Lower leg skin (tissue), 4 donors: ENCODE measurements at regions of chr13 and their contacts with region 1.

Region 1: DNA sequence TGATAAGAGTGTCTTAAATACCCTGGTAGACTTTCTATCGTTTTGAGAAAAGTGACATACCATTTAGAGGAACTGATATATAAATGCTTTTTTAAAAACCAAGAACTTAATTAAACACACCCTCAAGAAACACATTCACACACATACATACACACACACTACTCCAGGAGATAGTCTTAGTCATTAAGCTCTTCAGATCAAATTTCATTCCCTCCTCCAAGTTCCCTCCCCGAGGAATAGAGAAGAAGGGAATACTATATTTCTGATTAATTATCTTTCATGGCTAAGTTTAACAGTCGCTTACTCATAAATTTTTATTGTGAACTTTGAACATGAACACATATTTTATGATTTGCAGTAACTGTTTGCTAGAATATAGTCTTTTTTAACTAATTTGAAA is 1109.5 kb downstream of the SLITRK1 start:
- DNase-seq: no peak
- H3K4me3 ChIP-seq: no peak overlapping the region
- CTCF ChIP-seq: no peak
- POLR2A ChIP-seq: no peak

Region 2: DNA sequence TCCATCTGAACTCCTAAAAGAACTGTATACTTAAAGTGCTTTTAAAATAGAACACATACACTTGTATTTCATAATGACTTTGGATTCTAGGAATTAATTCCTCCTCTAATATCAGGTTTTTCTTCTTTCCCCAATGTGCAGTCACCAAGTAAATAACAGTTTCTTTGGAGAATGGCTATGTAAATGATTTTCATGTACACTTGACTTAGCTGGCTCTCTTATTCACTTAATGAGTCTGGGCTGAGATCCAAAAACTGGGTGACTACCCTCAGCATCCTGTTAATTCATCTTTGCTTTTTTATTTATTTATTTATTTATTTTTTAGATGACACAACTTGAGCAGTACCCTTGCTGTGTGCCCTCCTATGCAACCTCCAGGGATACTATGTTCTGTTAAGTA is 105.7 kb after region 1 on chr13:
- intact Hi-C with region 1: no loop called
- DNase-seq: no peak
- H3K4me3 ChIP-seq: no peak overlapping the region
- CTCF ChIP-seq: no peak
- POLR2A ChIP-seq: no peak

Region 3: GRCh38 chr13:83077499-83077898 is 304.7 kb after region 1 on chr13:
- intact Hi-C with region 1: no loop called
- DNase-seq: no peak
- H3K4me3 ChIP-seq: no peak overlapping the region
- CTCF ChIP-seq: no peak
- POLR2A ChIP-seq: no peak

Region 4: DNA sequence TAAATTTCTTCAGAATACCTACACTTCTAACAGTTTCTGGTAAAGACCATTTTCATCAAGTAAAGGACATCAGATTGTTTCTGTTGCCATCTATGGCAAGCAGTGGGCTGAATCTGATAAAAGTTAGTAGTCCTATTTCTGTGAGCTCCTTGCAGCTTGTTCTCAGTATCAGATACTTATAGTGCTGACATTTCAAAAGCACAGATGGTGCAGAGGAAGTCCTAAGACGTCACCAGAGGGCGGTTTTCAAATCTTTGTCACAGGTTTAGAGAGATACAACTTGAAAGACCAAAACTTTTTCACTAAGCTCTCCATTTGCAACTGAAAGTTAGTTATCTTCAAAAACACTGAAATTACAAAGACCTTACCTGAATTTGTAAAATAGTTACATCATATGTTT is 389.7 kb after region 1 on chr13:
- intact Hi-C with region 1: loop called (anchors 5 kb)
- DNase-seq: no peak
- H3K4me3 ChIP-seq: no peak overlapping the region
- CTCF ChIP-seq: no peak
- POLR2A ChIP-seq: no peak